ENCODE measurements at regions of chr11 and their contacts with region 1.

Region 1: DNA sequence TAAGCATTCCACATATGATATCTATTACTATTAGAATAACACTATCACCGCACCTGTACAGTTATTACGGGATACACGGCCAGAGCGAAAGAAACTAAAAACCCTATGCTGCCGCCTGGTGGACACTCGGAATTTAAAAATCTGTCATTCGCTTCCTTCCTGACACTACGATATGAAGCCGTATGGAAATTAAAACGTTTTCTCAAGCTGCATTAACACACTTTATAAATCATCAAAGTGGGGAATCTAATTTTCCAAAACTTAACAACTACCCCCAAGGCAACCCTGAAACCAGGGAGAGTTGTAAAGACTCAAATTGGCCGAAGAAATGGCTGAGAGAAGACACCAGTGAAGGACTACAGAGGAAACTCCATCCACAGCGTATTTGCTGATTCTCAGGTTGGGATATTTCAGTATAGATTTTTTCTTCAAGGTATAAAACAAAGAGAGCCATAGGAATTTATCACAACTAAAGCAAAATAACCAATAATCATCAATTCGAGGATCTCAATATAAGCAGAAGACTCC is 1.4 kb downstream of the CCDC73 start:
- DNase-seq: peak; percentile 51
- ATAC-seq: peak; percentile 95
- H3K4me3 ChIP-seq: peak overlapping the region; percentile 8 to 34; a peak in 3 of 4 replicates
- H3K27ac ChIP-seq: no peak overlapping the region
- H3K4me1 ChIP-seq: 0 out of 2 replicates have a peak, but pooled peaks cover 4% of the 10 kb centered on the region
- H3K27me3 ChIP-seq: peaks cover 1% of the 10 kb centered on the region; the same call in 1 of the 2 replicates
- CTCF ChIP-seq: peak; percentile 81

Region 2: DNA sequence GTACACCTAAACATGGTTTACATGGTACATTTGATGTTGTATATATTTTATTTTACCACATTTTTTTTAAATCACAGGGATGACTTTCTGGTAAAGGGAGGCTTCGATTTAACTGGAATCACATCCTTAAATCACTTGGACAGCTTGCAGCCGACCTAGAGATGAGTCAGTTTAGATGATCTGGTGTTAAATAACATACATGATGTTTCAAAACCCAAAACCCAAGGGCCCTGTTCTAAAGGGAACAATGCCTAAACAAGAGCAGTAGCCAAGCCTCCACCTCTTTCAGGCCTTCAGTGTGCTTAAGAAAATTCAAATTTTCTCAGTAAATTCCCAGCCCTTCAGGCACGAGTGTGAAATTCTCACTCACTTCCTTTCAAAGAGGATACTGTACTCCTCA is 466.5 kb before region 1 on chr11:
- CTCF ChIA-PET with region 1: no interaction called
- POLR2A ChIA-PET with region 1: no interaction called
- in situ Hi-C with region 1: no loop called
- intact Hi-C with region 1: loop called (anchors 5 kb)
- DNase-seq: no peak
- ATAC-seq: no peak
- H3K4me3 ChIP-seq: no peak overlapping the region
- H3K27ac ChIP-seq: no peak overlapping the region
- H3K4me1 ChIP-seq: no peaks in the 10 kb centered on the region
- H3K27me3 ChIP-seq: no peaks in the 10 kb centered on the region
- CTCF ChIP-seq: no peak

Region 3: DNA sequence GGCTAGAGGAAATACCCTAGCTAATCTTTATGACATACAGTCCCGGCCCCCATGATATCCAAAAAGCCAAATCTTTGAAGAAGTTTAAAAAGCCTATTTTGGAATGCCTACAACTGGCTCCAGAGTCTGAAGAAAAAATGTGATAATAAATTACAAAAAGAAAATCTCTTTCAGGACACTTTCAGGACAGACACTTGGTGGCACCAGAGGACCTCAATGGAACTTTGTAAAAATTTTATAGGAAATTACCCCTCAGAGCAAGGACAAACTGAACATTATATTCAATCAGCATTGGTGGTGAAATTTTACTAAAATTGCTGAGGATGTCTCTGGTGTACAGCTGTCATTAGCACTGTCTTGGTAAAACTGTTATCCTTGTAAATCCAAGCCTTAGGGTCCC is 79.5 kb before region 1 on chr11:
- CTCF ChIA-PET with region 1: no interaction called
- POLR2A ChIA-PET with region 1: interaction called, 3 read pairs
- in situ Hi-C with region 1: no loop called
- intact Hi-C with region 1: loop called (anchors 2 kb)
- DNase-seq: no peak
- ATAC-seq: peak; percentile 60; the same call in 1 of the 2 replicates
- H3K4me3 ChIP-seq: no peak overlapping the region
- H3K27ac ChIP-seq: no peak overlapping the region
- H3K4me1 ChIP-seq: no peaks in the 10 kb centered on the region
- H3K27me3 ChIP-seq: peaks cover 8% of the 10 kb centered on the region; the same call in 1 of the 2 replicates
- CTCF ChIP-seq: peak; percentile 68; the same call in 1 of the 2 replicates

Region 4: DNA sequence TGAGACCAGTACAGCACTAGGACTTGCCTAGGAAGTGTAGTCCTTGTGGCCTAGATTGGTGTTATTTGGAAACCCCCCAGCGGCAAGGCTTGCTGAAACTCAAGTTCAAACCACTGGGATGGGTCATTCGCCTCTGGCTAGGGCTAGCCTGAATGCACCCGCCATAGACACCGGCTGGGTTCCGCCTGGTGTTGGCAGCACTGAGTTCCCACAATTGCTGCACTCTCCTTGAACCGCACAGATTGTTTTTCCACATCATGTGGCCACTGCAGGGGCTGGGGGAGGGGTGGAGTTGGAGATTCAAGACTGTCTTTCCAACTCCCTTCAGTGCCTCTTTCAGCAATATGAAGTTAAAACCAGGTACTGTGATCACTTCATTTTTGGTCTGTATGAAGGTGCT is 41.6 kb before region 1 on chr11:
- CTCF ChIA-PET with region 1: no interaction called
- POLR2A ChIA-PET with region 1: no interaction called
- in situ Hi-C with region 1: no loop called
- intact Hi-C with region 1: loop called (anchors 5 kb)
- DNase-seq: no peak
- ATAC-seq: no peak
- H3K4me3 ChIP-seq: no peak overlapping the region
- H3K27ac ChIP-seq: no peak overlapping the region
- H3K4me1 ChIP-seq: no peaks in the 10 kb centered on the region
- H3K27me3 ChIP-seq: no peaks in the 10 kb centered on the region
- CTCF ChIP-seq: no peak

Region 5: GRCh38 chr11:32919338-32919737 is 126.3 kb after region 1 on chr11:
- CTCF ChIA-PET with region 1: no interaction called
- POLR2A ChIA-PET with region 1: no interaction called
- in situ Hi-C with region 1: no loop called
- intact Hi-C with region 1: no loop called
- DNase-seq: no peak
- ATAC-seq: no peak
- H3K4me3 ChIP-seq: no peak overlapping the region
- H3K27ac ChIP-seq: no peak overlapping the region
- H3K4me1 ChIP-seq: peaks cover 3% of the 10 kb centered on the region; the same call in 1 of the 2 replicates
- H3K27me3 ChIP-seq: no peaks in the 10 kb centered on the region
- CTCF ChIP-seq: no peak